Natural killer cell (primary cell): ENCODE measurements at regions of chr19 and their contacts with region 1.

Region 1: GRCh38 chr19:14271840-14272239 is 65.9 kb upstream of the ADGRL1 start:
- DNase-seq: no peak
- ATAC-seq: no peak
- H3K4me3 ChIP-seq: no peak overlapping the region
- H3K4me3 Mint-ChIP-seq: no peak overlapping the region
- H3K27ac ChIP-seq: no peak overlapping the region
- H3K27ac Mint-ChIP-seq: peak overlapping the region in 1 of 2 donors; percentile 33
- H3K4me1 ChIP-seq: peaks cover 15% of the 10 kb centered on the region
- H3K4me1 Mint-ChIP-seq: peaks cover 16 to 27% of the 10 kb centered on the region in 2 donors
- H3K27me3 ChIP-seq: peaks cover 6% of the 10 kb centered on the region
- H3K27me3 Mint-ChIP-seq: peaks cover 0 to 4% of the 10 kb centered on the region in 2 donors
- CTCF ChIP-seq: no peak

Region 2: DNA sequence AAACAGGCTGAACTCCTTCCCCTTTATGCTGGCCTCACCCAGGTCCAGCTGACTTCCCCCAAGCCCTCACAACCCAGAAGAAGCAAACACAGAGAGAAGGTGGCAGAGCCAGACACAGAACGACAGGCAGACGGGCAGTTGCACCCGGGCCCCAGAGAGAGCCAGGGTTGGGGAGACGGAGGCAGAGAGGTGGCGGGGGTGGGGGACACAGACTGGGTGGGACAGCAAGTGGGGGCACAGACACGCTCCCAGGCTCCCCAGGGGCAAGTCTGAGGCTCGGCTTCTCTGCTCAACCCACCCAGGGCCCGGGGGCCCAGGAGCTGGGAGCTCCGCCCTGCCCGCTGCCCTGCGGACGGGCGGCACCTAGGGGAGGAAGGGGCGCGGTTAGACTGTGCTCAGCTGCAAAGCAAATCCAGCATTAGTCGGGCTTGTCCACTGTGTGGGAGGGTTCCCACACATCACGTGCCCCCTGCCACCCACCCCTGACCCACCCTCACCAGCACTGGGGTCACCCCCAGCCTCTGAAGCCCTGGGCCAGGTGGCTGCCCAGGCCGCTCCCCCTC is 104.2 kb before region 1 on chr19:
- intact Hi-C with region 1: loop called (anchors 10 kb)
- DNase-seq: peak; percentile 40 to 61
- ATAC-seq: peak; percentile 64 to 73 (median 73)
- H3K4me3 ChIP-seq: peak overlapping the region; percentile 16
- H3K4me3 Mint-ChIP-seq: peak overlapping the region; percentile 89
- H3K27ac ChIP-seq: peak overlapping the region; percentile 79
- H3K27ac Mint-ChIP-seq: peak overlapping the region; percentile 85 to 95
- H3K4me1 ChIP-seq: peaks cover 38% of the 10 kb centered on the region
- H3K4me1 Mint-ChIP-seq: peaks cover 26 to 40% of the 10 kb centered on the region in 2 donors
- H3K27me3 ChIP-seq: no peaks in the 10 kb centered on the region
- H3K27me3 Mint-ChIP-seq: no peaks in the 10 kb centered on the region
- CTCF ChIP-seq: no peak

Region 3: GRCh38 chr19:14614099-14614412 is 342.2 kb after region 1 on chr19:
- intact Hi-C with region 1: no loop called
- DNase-seq: peak in 1 of 2 donors; percentile 9
- ATAC-seq: peak in 2 of 3 donors; percentile 42 to 90
- H3K4me3 ChIP-seq: no peak overlapping the region
- H3K4me3 Mint-ChIP-seq: no peak overlapping the region
- H3K27ac ChIP-seq: peak overlapping the region; percentile 75
- H3K27ac Mint-ChIP-seq: peak overlapping the region in 1 of 2 donors; percentile 57
- H3K4me1 ChIP-seq: peaks cover 17% of the 10 kb centered on the region
- H3K4me1 Mint-ChIP-seq: no peaks in the 10 kb centered on the region
- H3K27me3 ChIP-seq: no peaks in the 10 kb centered on the region
- H3K27me3 Mint-ChIP-seq: peaks cover 6 to 9% of the 10 kb centered on the region in 2 donors
- CTCF ChIP-seq: no peak

Region 4: GRCh38 chr19:14632279-14632678 is 360.4 kb after region 1 on chr19:
- intact Hi-C with region 1: no loop called
- DNase-seq: peak in 1 of 2 donors; percentile 48
- ATAC-seq: peak in 1 of 3 donors; percentile 50
- H3K4me3 ChIP-seq: no peak overlapping the region
- H3K4me3 Mint-ChIP-seq: no peak overlapping the region
- H3K27ac ChIP-seq: no peak overlapping the region
- H3K27ac Mint-ChIP-seq: no peak overlapping the region
- H3K4me1 ChIP-seq: no peaks in the 10 kb centered on the region
- H3K4me1 Mint-ChIP-seq: peaks cover 0 to 4% of the 10 kb centered on the region in 2 donors
- H3K27me3 ChIP-seq: no peaks in the 10 kb centered on the region
- H3K27me3 Mint-ChIP-seq: peaks cover 0 to 11% of the 10 kb centered on the region in 2 donors
- CTCF ChIP-seq: no peak